Caco-2 (cell line): ENCODE measurements at regions of chr14 and their contacts with region 1.

Region 1: DNA sequence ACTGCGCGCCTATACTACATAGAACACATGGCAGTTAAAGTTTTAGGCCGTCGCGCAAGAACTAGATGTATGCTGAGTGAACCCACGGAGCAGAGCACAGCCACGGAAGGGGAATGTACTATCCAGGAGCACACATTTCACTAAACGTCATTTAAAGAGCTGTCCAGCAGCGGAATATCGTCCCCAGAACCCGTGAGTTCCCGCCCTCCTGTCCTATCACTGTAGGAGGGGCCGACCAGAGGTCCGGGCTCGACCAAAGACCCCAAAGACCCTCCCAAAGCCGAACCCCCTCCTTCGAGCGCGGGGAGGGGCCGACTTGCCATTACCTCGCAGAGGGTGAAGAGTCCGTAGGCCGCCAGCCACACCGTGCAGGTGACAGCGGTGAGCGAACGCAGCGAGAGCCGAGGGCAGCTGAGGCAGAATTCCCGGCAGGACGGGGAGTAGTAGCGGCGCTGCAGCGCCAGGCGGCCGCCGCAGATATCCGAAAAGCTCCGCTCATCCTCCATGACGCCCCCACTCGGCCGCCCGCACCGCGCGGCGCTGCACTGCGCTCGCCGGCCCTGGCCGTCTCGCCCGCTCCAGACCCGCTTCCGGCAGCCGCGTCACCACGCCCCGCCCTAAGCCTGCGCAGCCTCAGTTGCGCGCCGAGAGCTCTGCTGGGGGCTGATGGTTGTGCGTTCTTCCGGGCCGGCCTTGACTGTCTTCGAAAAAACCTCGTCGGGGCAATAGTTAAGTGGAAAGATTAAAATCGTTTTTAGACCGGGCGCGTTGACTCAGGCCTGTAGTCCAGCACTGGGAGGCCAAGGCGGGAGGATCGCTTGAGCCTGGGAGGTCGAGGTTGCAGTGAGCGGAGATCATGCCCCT is at the start of gene PIGH:
- DNase-seq: peak; percentile 92 to 96
- H3K4me3 ChIP-seq: peak within 1 kb of the TSS; percentile 95
- H3K4me3 Mint-ChIP-seq: peak within 1 kb of the TSS; percentile 88
- H3K27ac Mint-ChIP-seq: peak within 1 kb of the TSS; percentile 87
- H3K4me1 ChIP-seq: peaks cover 8% of the 10 kb centered on the region; the same call in 1 of the 2 replicates
- H3K4me1 Mint-ChIP-seq: peaks cover 6% of the 10 kb centered on the region
- H3K27me3 ChIP-seq: no peaks in the 10 kb centered on the region
- H3K27me3 Mint-ChIP-seq: no peaks in the 10 kb centered on the region
- CTCF ChIP-seq: peak; percentile 80 to 85
- total RNA-seq, gene PIGH: 16.9 and 20.4 TPM in 2 replicates

Region 2: GRCh38 chr14:67426983-67427606 is 172.8 kb before region 1 on chr14:
- CTCF ChIA-PET with region 1: interaction called, 14 read pairs
- POLR2A ChIA-PET with region 1: no interaction called
- intact Hi-C with region 1: no loop called
- DNase-seq: peak; percentile 84 to 85
- H3K4me3 ChIP-seq: no peak overlapping the region
- H3K4me3 Mint-ChIP-seq: no peak overlapping the region
- H3K27ac Mint-ChIP-seq: no peak overlapping the region
- H3K4me1 ChIP-seq: peaks cover 27% of the 10 kb centered on the region
- H3K4me1 Mint-ChIP-seq: peaks cover 10% of the 10 kb centered on the region
- H3K27me3 ChIP-seq: no peaks in the 10 kb centered on the region
- H3K27me3 Mint-ChIP-seq: no peaks in the 10 kb centered on the region
- CTCF ChIP-seq: peak; percentile 78 to 82

Region 3: DNA sequence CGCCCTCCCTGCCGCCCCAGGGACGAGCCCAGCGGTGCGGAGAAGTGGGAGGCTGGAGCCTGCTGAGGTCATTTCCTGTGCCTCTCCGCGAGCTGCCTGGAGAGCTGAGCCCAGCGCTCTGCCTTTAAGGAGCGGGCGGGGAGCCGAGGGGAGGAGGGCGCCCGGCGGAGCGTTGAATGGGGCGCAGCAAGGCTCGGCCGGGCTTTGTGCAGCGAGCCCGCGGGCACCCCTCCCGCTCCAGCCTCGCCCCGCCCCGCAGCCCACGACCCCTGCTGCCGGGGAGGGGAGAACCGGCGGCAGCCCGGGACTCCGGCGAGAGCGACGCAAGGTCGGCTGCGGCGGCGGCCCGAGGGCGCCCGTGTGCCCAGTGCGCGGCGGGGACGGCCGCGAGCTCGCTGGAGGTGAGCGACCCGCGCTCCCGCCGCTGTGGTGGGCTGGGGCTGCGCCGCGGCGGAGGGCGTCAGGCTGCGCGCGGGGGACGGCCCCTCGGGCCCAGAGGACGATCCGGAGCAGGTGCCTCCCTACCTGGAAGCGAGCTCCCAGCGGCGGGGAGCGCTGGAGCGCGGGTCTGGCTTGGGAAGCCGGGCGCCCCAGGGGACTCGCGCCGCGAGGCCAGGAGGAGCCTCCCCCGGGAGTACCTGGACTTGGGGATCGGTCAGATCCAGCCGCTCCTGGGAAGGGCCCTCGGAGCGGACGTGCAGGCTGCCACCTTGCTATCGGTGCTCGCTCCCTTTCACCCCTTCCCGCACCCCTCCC is 66.8 kb before region 1 on chr14 and contains the start of gene PLEKHH1:
- CTCF ChIA-PET with region 1: no interaction called
- POLR2A ChIA-PET with region 1: interaction called, 12 read pairs
- intact Hi-C with region 1: no loop called
- DNase-seq: peak; percentile 84 to 86
- H3K4me3 ChIP-seq: peak within 1 kb of the TSS; percentile 87
- H3K4me3 Mint-ChIP-seq: peak within 1 kb of the TSS; percentile 79
- H3K27ac Mint-ChIP-seq: no peak within 1 kb of the TSS
- H3K4me1 ChIP-seq: peaks cover 8% of the 10 kb centered on the region
- H3K4me1 Mint-ChIP-seq: no peaks in the 10 kb centered on the region
- H3K27me3 ChIP-seq: no peaks in the 10 kb centered on the region
- H3K27me3 Mint-ChIP-seq: no peaks in the 10 kb centered on the region
- CTCF ChIP-seq: no peak
- total RNA-seq, gene PLEKHH1: 32.4 and 41.2 TPM in 2 replicates

Region 4: DNA sequence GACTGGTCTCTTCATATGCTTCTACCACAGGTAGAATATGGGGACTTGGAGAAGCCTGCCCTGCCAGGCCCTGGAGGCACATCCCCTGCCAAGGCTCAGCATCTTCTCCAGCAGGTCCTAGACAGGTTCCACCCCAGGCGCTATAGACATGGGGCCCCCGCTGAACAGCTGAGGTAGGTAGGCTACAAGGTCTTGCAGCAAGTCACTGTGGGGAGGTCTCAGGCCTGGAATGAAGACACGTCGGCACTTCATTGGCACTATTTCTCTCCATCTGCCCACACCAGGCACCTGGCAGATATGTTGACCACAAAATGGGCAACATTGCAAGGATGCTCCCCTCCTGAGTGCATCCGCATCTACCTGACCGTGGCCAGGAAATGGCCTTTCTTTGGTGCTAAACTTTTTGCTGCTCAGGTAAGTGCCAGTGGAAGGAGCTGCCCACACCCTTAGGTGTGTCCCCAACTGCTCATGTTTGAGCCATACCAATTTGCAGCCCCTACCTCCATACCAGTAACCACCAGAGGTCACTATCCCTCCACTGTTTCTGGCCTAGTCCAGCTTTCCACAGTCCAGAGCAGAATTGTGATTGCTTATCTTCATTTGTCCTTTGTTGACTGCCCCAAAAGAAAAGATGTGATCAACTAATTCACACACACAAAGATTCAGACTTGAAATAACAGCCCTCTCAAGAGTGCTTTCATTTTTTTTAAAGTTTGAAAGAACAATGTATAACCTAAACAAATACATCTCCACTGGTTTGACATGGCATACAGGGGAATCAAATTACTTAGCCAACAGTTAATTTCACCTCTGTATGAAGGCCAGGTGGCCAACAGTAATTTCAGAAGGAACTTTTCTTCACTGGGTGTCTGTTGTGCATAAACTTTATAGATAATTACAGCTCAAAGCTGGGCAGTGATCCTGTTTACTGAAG is 16.0 kb before region 1 on chr14:
- CTCF ChIA-PET with region 1: interaction called, 17 read pairs
- POLR2A ChIA-PET with region 1: interaction called, 3 read pairs
- intact Hi-C with region 1: loop called (anchors 1 kb)
- DNase-seq: peak; percentile 62 to 73
- H3K4me3 ChIP-seq: no peak overlapping the region
- H3K4me3 Mint-ChIP-seq: no peak overlapping the region
- H3K27ac Mint-ChIP-seq: no peak overlapping the region
- H3K4me1 ChIP-seq: peaks cover 13% of the 10 kb centered on the region
- H3K4me1 Mint-ChIP-seq: no peaks in the 10 kb centered on the region
- H3K27me3 ChIP-seq: no peaks in the 10 kb centered on the region
- H3K27me3 Mint-ChIP-seq: no peaks in the 10 kb centered on the region
- CTCF ChIP-seq: peak; percentile 78 to 82

Region 5: GRCh38 chr14:67619446-67620216 is 19.7 kb after region 1 on chr14 and contains the start of gene ARG2:
- CTCF ChIA-PET with region 1: interaction called, 14 read pairs
- POLR2A ChIA-PET with region 1: interaction called, 7 read pairs
- intact Hi-C with region 1: loop called (anchors 1 kb)
- DNase-seq: peak; percentile 99
- H3K4me3 ChIP-seq: peak within 1 kb of the TSS; percentile 63
- H3K4me3 Mint-ChIP-seq: peak within 1 kb of the TSS; percentile 90
- H3K27ac Mint-ChIP-seq: peak within 1 kb of the TSS; percentile 97
- H3K4me1 ChIP-seq: peaks cover 5% of the 10 kb centered on the region; the same call in 1 of the 2 replicates
- H3K4me1 Mint-ChIP-seq: peaks cover 16% of the 10 kb centered on the region
- H3K27me3 ChIP-seq: no peaks in the 10 kb centered on the region
- H3K27me3 Mint-ChIP-seq: peaks cover 2% of the 10 kb centered on the region
- CTCF ChIP-seq: peak in 1 of 2 experiments; percentile 26
- total RNA-seq, gene ARG2: 22.6 and 22.8 TPM in 2 replicates

Region 6: DNA sequence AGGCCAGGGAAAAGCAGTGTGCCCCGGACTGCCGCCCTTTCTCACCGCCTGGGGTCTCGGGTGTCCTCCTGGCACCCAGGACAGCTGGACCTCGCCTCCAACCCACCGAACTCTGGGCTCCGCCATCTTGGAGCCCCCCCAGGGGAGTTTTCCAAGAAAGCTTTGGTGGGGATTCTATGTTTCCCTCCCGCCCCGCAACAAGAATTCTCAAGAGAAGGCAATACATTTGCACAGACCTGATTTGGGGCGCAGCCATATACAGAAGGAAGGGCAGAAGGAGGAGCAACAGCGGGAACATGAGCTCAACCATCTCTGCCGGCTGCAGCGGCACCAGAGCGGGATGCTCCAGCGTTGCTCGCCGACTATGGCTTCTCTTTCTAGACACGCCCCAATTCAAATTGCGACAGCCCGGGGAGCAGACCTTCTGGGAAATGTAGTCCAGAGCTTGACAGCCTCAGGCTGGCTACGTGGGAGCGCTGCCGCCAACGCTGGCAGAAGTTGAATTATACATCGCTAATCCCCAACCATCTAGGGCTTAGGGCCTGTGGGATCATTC is 95.5 kb after region 1 on chr14 and contains the start of gene RDH11:
- CTCF ChIA-PET with region 1: interaction called, 9 read pairs
- POLR2A ChIA-PET with region 1: interaction called, 15 read pairs
- intact Hi-C with region 1: no loop called
- DNase-seq: peak; percentile 89 to 91
- H3K4me3 ChIP-seq: peak within 1 kb of the TSS; percentile 50
- H3K4me3 Mint-ChIP-seq: peak within 1 kb of the TSS; percentile 100
- H3K27ac Mint-ChIP-seq: peak within 1 kb of the TSS; percentile 99
- H3K4me1 ChIP-seq: 0 out of 2 replicates have a peak, but pooled peaks cover 7% of the 10 kb centered on the region
- H3K4me1 Mint-ChIP-seq: peaks cover 6% of the 10 kb centered on the region
- H3K27me3 ChIP-seq: no peaks in the 10 kb centered on the region
- H3K27me3 Mint-ChIP-seq: no peaks in the 10 kb centered on the region
- CTCF ChIP-seq: no peak
- total RNA-seq, gene RDH11: 80.2 and 83.1 TPM in 2 replicates